HepG2 (cell line): ENCODE measurements at regions of chr1 and their contacts with region 1.

Region 1: GRCh38 chr1:168719306-168720111 is 9.5 kb downstream of the DPT start:
- DNase-seq: peak; percentile 15
- ATAC-seq: peak; percentile 43; the same call in 1 of the 3 replicates
- H3K4me3 ChIP-seq: no peak overlapping the region
- H3K27ac ChIP-seq: no peak overlapping the region
- H3K4me1 ChIP-seq: peaks cover 15% of the 10 kb centered on the region
- H3K27me3 ChIP-seq: peaks cover 0 to 19% of the 10 kb centered on the region in 2 experiments; a peak in 2 of 5 replicates
- CTCF ChIP-seq: no peak
- EP300 ChIP-seq: no peak
- POLR2A ChIP-seq: no peak
- RAD21 ChIP-seq: no peak

Region 2: GRCh38 chr1:168373869-168374268 is 345.6 kb before region 1 on chr1:
- CTCF ChIA-PET with region 1: no interaction called
- POLR2A ChIA-PET with region 1: no interaction called
- in situ Hi-C with region 1: no loop called
- intact Hi-C with region 1: no loop called
- DNase-seq: no peak
- ATAC-seq: no peak
- H3K4me3 ChIP-seq: no peak overlapping the region
- H3K27ac ChIP-seq: no peak overlapping the region
- H3K4me1 ChIP-seq: peaks cover 4% of the 10 kb centered on the region
- H3K27me3 ChIP-seq: no peaks in the 10 kb centered on the region
- CTCF ChIP-seq: no peak
- EP300 ChIP-seq: no peak
- POLR2A ChIP-seq: no peak
- RAD21 ChIP-seq: no peak

Region 3: DNA sequence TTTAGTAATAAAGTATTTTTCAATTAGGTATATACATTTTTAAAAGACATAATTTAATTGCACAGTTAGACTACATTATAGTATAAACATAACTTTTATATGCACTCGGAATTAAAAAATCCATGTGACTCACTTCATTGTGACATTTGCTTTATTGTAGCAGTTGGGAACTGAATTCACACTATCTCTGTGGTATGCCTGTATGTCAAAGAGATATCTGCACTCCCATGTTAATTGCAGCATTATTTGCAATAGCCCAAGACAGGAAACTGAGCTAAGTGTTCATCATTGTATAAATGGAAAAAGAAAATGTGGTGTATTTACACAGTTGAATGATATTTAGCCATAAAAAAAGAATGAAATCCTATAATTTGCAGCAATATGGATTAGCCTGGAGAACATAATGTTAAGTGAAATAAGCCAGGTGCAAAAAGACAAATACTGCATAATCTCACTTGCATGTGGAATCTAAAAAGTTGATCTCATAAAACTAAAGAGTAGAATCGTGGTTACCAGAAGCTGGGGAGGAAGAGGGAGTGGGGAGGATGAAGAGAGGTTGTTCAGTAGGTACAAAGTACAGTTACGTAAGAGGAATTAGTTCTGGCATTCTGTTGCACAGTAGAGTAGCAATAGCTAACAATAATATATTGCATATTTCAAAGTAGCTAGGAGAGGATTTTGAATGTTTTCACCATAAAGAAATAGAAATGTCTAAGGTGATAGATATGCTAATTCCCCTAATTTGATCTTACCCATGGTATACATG is 55.3 kb before region 1 on chr1:
- CTCF ChIA-PET with region 1: no interaction called
- POLR2A ChIA-PET with region 1: no interaction called
- in situ Hi-C with region 1: loop called (anchors 10 kb)
- intact Hi-C with region 1: no loop called
- DNase-seq: peak; percentile 56
- ATAC-seq: peak; percentile 74
- H3K4me3 ChIP-seq: no peak overlapping the region
- H3K27ac ChIP-seq: no peak overlapping the region
- H3K4me1 ChIP-seq: peaks cover 15% of the 10 kb centered on the region
- H3K27me3 ChIP-seq: no peaks in the 10 kb centered on the region
- CTCF ChIP-seq: no peak
- EP300 ChIP-seq: peak in 1 of 2 experiments; percentile 37; a peak in 1 of 4 replicates
- POLR2A ChIP-seq: no peak
- RAD21 ChIP-seq: no peak